Activated CD8-positive, alpha-beta T cell treated with anti-CD3 and anti-CD28 coated beads, Interleukin-2, amount 10 ng/mL, durations not matched to agents 7 days and 5 days (primary cell): ENCODE measurements at regions of chr15 and their contacts with region 1.

Region 1: DNA sequence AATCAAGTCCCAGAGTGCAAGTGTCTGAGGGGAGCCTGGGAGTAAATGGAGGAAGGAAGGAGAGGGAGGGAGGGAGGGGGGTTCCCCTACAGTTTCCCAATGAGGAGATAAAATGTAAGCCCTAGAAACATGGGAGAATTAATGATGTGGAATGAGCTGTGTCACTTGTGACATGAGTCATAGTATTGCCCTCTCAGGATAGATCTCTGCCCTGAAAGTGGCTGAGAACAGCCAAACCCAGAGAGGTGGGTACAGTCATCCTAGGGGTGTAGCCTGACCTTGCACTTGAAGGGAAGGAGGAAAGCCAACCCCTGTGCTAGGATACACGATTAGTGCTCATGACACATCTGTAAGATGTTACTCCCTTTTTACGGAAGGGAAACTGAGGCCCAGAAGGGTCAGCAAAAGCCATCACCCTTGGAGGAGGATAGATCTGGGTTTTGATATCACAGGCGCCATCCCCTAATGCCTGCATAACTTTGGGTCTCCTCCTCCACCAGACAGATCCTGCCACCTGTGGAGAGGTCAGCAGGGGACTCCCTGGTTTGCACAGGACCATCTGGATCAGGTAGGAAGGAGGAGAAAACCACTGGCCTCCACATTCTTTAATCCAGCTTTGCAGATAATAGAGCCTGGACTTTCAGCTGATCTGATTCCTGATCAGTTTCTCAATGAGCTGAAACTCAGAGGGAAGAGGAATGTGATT is 23.1 kb upstream of the USP3 start:
- DNase-seq: no peak
- ATAC-seq: no peak
- H3K4me3 Mint-ChIP-seq: no peak overlapping the region
- H3K27ac Mint-ChIP-seq: no peak overlapping the region
- H3K4me1 Mint-ChIP-seq: peaks cover 54% of the 10 kb centered on the region
- H3K27me3 Mint-ChIP-seq: no peaks in the 10 kb centered on the region

Region 2: DNA sequence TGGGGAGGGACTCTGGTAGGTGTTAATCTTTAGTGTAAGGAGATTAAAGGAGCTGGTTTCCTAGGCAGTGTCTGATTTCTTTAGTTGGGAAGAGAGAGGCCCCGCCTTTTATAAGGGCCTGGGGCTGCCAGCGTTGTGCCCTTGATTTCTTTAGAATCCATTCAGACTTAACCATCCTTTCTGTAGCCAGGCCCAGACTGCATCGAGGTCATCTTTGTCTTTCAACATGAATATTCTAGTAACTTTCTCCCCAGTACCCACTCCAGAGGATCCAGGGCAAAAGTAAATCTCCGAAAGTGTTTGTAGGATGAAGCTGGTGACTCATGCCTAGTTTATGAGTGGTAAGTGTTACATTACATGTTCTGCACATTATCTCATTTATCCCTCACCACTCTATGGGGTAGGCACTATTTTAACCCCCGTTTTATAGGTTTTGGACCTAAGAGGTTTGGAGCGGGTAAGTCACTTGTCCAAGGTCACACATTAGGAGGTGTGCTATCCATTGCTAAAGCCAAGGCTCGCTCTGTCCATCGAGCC is 11.4 kb after region 1 on chr15:
- CTCF ChIA-PET with region 1: interaction called, 124 read pairs
- POLR2A ChIA-PET with region 1: interaction called, 10 read pairs
- DNase-seq: no peak
- ATAC-seq: no peak
- H3K4me3 Mint-ChIP-seq: no peak overlapping the region
- H3K27ac Mint-ChIP-seq: no peak overlapping the region
- H3K4me1 Mint-ChIP-seq: peaks cover 38% of the 10 kb centered on the region
- H3K27me3 Mint-ChIP-seq: no peaks in the 10 kb centered on the region

Region 3: DNA sequence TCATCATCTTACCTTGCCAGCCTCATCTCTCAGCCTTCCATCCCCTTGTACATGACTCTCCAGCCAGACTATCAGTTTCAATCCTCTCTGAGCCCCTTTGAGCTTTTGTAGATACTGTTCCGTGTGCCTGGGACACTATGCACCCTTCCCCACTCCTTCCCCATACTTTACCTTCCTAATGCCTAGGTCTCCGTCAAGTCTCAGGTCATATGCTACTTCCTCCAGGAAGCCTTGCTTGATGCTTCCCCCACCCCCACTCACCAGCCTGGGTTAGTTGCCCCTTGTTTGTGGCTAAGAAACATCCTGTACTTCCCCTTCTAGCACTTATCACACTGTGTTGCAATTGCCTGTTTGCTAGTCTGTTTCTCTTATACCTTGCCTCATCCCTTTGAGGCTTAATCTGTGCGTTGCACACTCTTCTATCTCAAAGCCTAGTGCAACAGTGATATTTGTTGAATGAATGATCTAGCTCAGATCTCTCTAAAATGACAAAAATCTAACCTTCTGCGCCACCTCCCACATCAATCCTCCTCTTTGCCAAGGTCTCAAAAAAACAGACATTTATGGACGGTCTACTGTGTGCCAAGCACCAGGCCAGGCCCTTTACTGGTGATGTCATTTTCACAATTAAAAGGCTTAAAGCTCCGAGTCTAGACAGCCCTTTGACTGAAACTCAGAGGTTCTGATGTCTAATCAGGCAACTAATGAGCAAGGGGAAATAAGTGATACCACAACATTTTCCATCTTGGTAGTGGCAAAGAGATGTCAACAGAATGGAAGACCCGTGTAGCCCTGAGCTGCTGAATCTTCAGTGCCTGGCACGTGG is 16.6 kb after region 1 on chr15:
- CTCF ChIA-PET with region 1: interaction called, 124 read pairs
- POLR2A ChIA-PET with region 1: interaction called, 36 read pairs
- DNase-seq: peak; percentile 77
- ATAC-seq: peak; percentile 70
- H3K4me3 Mint-ChIP-seq: no peak overlapping the region
- H3K27ac Mint-ChIP-seq: no peak overlapping the region
- H3K4me1 Mint-ChIP-seq: peaks cover 51% of the 10 kb centered on the region
- H3K27me3 Mint-ChIP-seq: no peaks in the 10 kb centered on the region

Region 4: DNA sequence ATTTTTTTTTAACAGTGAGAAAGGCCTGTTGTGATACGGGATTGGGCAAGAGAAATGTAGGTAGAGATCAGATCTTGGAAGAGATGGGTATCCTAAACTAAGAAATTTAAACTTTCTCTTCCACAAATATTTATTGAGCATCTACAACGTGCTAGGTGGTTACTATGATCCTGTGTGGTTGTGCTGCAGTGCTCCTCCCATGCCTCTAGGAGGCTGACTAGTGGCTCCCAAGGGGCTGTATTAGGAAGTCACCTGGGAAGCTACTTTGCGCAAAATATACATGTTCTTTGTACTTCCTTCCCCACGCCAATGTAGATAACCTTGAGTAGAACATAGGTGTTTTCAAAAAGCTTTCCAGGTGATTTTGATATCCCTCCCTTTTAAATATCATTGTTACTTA is 50.3 kb after region 1 on chr15:
- CTCF ChIA-PET with region 1: no interaction called
- POLR2A ChIA-PET with region 1: no interaction called
- DNase-seq: no peak
- ATAC-seq: no peak
- H3K4me3 Mint-ChIP-seq: no peak overlapping the region
- H3K27ac Mint-ChIP-seq: no peak overlapping the region
- H3K4me1 Mint-ChIP-seq: peaks cover 46% of the 10 kb centered on the region
- H3K27me3 Mint-ChIP-seq: no peaks in the 10 kb centered on the region